PC-3 (cell line): ENCODE measurements at regions of chr10 and their contacts with region 1.

Region 1: GRCh38 chr10:74081192-74081803 is 69.3 kb downstream of the AP3M1 start:
- DNase-seq: peak; percentile 94
- ATAC-seq: peak; percentile 49
- H3K4me3 ChIP-seq: no peak overlapping the region
- H3K27ac ChIP-seq: no peak overlapping the region
- H3K4me1 ChIP-seq: peaks cover 43% of the 10 kb centered on the region
- H3K27me3 ChIP-seq: no peaks in the 10 kb centered on the region
- CTCF ChIP-seq: no peak

Region 2: GRCh38 chr10:73848821-73849489 is 232.3 kb before region 1 on chr10:
- CTCF ChIA-PET with region 1: no interaction called
- POLR2A ChIA-PET with region 1: interaction called, 16 read pairs
- intact Hi-C with region 1: loop called (anchors 5 kb)
- DNase-seq: peak; percentile 100
- ATAC-seq: peak; percentile 96
- H3K4me3 ChIP-seq: no peak overlapping the region
- H3K27ac ChIP-seq: no peak overlapping the region
- H3K4me1 ChIP-seq: no peaks in the 10 kb centered on the region
- H3K27me3 ChIP-seq: no peaks in the 10 kb centered on the region
- CTCF ChIP-seq: peak; percentile 100

Region 3: DNA sequence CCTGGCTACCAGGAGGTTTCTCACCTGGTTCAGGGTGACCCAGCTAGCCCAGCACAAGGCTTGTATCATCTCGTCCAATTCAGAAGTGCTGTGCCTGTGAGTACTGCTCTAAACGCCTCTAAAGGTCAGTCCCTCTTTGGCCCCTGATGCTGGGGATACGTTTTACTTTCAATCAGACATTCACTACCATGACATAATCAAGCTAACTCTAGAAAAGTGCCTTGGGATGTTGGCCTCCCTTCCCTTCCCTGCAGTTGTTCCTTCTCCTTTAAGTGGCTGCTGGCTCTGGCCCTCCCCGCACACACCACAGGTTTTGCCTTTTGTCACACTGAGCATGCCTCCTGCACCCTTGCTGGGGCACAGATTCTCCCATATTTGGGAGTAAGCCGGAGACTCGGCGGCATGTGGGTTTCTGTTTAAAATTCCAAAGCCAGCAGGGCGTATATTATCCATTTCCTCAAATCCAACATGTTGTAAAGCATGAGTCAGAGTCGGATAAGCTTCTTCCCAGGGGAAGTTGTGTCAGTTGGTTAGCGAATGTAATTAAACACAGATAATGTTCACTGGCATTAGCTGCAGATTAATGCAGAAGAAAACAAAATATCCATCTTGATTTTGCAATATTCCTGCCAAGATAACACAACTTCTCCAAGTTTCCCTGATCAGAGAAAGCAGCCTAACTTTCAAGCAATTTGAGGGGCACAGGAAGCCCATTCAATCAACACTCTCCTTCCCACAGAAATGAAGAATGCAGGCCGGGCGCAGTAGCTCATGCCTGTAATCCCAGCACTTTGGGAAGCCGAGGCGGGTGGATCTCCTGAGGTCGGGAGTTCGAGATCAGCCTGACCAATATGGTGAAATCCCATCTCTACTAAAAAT is 115.2 kb before region 1 on chr10:
- CTCF ChIA-PET with region 1: interaction called, 10 read pairs
- POLR2A ChIA-PET with region 1: no interaction called
- intact Hi-C with region 1: loop called (anchors 1 kb)
- DNase-seq: peak; percentile 100
- ATAC-seq: peak; percentile 98
- H3K4me3 ChIP-seq: peak overlapping the region; percentile 6
- H3K27ac ChIP-seq: peak overlapping the region; percentile 73
- H3K4me1 ChIP-seq: peaks cover 27% of the 10 kb centered on the region
- H3K27me3 ChIP-seq: no peaks in the 10 kb centered on the region
- CTCF ChIP-seq: no peak

Region 4: DNA sequence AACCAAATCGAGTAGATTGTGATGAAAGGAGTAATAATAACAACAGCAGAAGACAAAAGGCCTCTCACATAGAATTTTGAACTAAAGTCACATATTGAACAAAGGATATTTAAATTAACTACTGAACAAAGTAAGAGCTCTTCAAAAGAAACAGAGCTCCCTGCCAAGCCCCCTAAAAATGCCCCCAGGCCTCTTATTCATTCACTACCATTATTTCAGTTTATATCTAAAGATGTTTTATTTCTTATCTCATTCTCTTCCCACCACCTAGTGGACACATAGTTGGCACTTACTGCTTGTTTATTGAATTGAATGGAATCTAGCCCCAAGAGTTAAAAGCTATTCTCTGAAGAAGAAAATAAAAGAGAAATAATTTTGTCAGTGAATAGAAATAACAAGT is 46.0 kb before region 1 on chr10:
- CTCF ChIA-PET with region 1: interaction called, 11 read pairs
- POLR2A ChIA-PET with region 1: interaction called, 4 read pairs
- intact Hi-C with region 1: loop called (anchors 1 kb)
- DNase-seq: peak; percentile 76
- ATAC-seq: peak; percentile 51
- H3K4me3 ChIP-seq: no peak overlapping the region
- H3K27ac ChIP-seq: no peak overlapping the region
- H3K4me1 ChIP-seq: no peaks in the 10 kb centered on the region
- H3K27me3 ChIP-seq: no peaks in the 10 kb centered on the region
- CTCF ChIP-seq: peak; percentile 98

Region 5: DNA sequence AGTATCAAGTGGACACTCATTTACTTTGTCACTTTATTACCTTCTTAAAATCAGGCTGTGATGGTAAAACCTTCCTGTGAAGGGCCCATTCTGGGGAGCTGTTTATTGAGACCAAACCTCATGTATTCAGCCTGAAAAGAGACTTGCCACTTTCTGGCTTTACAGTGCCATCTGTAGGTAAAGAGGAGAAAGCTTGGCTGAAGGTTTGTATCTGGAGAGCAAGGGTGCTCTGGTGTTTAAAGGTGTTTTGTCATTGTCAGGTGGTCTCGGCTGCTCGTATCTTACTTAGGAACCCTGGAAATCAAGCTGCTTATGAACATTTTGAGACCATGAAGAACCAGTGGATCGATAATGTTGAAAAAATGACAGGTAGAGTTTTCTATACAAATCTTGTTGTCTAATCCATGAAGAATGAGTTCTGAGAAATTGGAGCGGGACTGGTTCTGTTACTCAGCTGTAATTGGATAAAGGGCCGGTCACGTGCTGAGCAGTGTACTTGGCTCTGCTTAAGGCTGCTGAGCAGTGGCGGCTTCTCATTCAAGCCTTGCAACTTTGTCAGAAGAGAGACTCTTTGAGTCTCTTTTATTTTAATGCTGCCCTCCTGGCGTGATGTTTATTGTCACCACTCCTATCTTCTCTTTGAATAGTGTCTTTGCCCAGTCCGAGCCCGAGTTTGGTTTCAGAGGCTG is 22.4 kb after region 1 on chr10:
- CTCF ChIA-PET with region 1: interaction called, 18 read pairs
- POLR2A ChIA-PET with region 1: interaction called, 5 read pairs
- intact Hi-C with region 1: no loop called
- DNase-seq: peak; percentile 90
- ATAC-seq: peak; percentile 87
- H3K4me3 ChIP-seq: no peak overlapping the region
- H3K27ac ChIP-seq: no peak overlapping the region
- H3K4me1 ChIP-seq: no peaks in the 10 kb centered on the region
- H3K27me3 ChIP-seq: no peaks in the 10 kb centered on the region
- CTCF ChIP-seq: peak; percentile 100

Region 6: GRCh38 chr10:74137992-74138391 is 56.7 kb after region 1 on chr10:
- CTCF ChIA-PET with region 1: no interaction called
- POLR2A ChIA-PET with region 1: no interaction called
- intact Hi-C with region 1: no loop called
- DNase-seq: no peak
- ATAC-seq: no peak; the same call in 1 of the 2 replicates
- H3K4me3 ChIP-seq: no peak overlapping the region
- H3K27ac ChIP-seq: no peak overlapping the region
- H3K4me1 ChIP-seq: no peaks in the 10 kb centered on the region
- H3K27me3 ChIP-seq: no peaks in the 10 kb centered on the region
- CTCF ChIP-seq: 0 out of 2 replicates have a peak, but pooled peaks have one; percentile 35

Region 7: GRCh38 chr10:74156919-74157289 is 75.6 kb after region 1 on chr10:
- CTCF ChIA-PET with region 1: no interaction called
- POLR2A ChIA-PET with region 1: no interaction called
- intact Hi-C with region 1: no loop called
- DNase-seq: no peak
- ATAC-seq: no peak
- H3K4me3 ChIP-seq: no peak overlapping the region
- H3K27ac ChIP-seq: no peak overlapping the region
- H3K4me1 ChIP-seq: peaks cover 20% of the 10 kb centered on the region
- H3K27me3 ChIP-seq: no peaks in the 10 kb centered on the region
- CTCF ChIP-seq: no peak

Region 8: DNA sequence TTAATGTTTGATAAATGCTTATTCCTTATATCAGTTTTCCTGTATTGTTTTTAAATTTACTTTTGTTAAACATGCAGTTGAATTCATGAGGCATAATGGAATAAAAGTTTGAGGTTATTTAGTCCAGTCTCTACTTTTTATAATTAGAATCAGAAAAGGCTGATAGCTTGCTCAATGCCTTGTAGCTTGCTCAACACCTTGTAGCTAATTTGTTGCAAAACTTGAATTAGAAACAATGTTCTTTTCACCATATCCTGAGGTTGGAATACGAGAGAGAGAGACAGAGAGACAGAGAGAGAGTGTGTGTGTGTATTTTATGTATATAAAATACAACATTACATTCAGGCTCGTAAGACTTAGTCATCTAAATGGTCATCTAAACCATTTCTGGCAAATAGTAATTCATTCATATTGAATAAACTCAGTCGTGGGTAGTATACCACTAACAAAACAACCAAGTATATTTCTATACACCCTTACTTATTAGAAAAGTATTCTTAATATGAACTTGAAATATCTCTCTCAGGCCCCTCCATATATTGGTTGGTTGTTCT is 313.2 kb after region 1 on chr10:
- CTCF ChIA-PET with region 1: no interaction called
- POLR2A ChIA-PET with region 1: no interaction called
- intact Hi-C with region 1: no loop called
- DNase-seq: peak; percentile 43
- ATAC-seq: peak; percentile 85
- H3K4me3 ChIP-seq: no peak overlapping the region
- H3K27ac ChIP-seq: no peak overlapping the region
- H3K4me1 ChIP-seq: no peaks in the 10 kb centered on the region; the same call in 1 of the 2 replicates
- H3K27me3 ChIP-seq: no peaks in the 10 kb centered on the region
- CTCF ChIP-seq: no peak